Stomach (tissue), 19 donors: ENCODE measurements at regions of chr9 and their contacts with region 1.

Region 1: GRCh38 chr9:6703898-6704639 is 53.7 kb upstream of the KDM4C start:
- DNase-seq: peak; percentile 92 to 97
- H3K4me3 ChIP-seq: peak overlapping the region; percentile 48 to 63 (median 58)
- H3K27ac ChIP-seq: peak overlapping the region; percentile 79 to 87 (median 86)
- H3K4me1 ChIP-seq: peaks cover 0 to 8% (median 0%) of the 10 kb centered on the region in 4 donors
- H3K27me3 ChIP-seq: no peaks in the 10 kb centered on the region
- CTCF ChIP-seq: no peak
- EP300 ChIP-seq: no peak
- POLR2A ChIP-seq: peak in 1 of 4 donors; percentile 13

Region 2: DNA sequence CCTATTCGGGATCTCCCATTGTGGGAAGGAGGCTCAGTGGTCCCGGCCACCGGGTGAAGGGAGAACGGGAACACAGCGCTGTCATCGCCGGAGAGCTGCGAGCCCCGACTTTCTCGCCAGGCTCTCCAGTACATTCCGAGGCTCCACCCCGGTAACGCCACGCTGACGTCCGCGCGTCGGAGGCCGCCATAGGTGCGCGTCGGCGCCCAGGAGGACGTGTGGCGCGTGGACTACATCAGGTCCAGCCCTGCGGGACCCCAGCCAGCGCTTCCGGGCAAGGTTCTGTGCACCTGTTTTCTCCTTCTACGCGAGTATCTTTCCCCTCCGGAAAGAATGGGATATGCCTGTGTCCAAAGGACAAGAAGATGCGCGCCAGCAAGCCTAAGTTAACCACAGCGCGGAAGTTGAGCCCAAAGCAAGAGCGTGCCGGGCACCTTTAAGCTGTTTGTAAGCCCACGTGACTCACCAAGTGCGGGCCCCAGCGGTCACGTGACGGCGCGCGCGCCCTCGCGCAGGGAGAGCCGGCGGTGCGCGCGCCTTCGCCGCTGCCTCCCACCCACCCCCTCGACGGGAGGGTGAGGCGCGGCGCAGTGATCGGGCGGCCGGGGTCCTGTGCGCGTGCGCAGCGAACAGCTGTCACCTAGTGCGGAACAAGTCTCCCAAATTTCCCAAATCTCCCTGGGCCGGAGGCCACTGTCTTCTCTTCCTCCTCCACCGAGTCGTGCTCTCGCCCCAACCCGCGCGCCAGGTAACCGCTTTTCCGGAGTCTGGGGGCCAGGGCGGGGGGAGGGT is 53.6 kb after region 1 on chr9 and contains the start of gene KDM4C:
- intact Hi-C with region 1: loop called (anchors 10 kb)
- DNase-seq: peak; percentile 97 to 99
- H3K4me3 ChIP-seq: peak within 1 kb of the TSS; percentile 82 to 94 (median 89)
- H3K27ac ChIP-seq: peak within 1 kb of the TSS; percentile 93 to 99 (median 98)
- H3K4me1 ChIP-seq: peaks cover 15 to 40% (median 26%) of the 10 kb centered on the region in 4 donors
- H3K27me3 ChIP-seq: no peaks in the 10 kb centered on the region
- CTCF ChIP-seq: no peak
- EP300 ChIP-seq: no peak
- POLR2A ChIP-seq: peak in 2 of 4 donors; percentile 86 to 87
- total RNA-seq, gene KDM4C: 77.6 to 129 (median 85.2) TPM